Naive thymus-derived CD4-positive, alpha-beta T cell (primary cell): ENCODE measurements at regions of chr15 and their contacts with region 1.

Region 1: DNA sequence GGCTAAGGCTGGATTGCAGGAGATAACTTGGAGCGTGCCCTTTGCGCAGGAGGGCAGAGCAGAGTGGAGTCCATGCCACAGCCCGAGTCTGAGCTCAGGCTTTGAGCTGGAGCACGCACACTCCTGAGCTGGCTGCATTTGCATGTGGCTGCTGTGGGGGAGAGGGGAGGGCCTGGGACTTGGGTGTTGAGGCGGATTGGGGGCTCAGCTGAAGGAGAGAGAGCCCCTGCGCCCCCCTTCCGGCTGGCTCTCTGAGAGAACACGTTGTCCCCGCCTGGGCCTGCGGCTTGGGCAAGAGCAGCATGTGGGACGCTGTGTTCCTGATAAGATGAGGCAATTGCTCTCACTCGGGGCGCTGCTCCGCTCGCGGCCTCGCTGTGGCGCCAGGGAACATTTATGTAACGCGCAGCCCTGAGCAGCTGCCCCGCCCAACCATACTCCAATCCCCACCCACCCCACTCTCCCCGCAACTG is 39.1 kb downstream of the KLF13 start:
- DNase-seq: peak; percentile 53 to 82 (median 78)
- ATAC-seq: peak; percentile 68
- H3K4me3 ChIP-seq: peak overlapping the region; percentile 36
- H3K4me3 Mint-ChIP-seq: peak overlapping the region; percentile 72 to 88 (median 85)
- H3K27ac ChIP-seq: peak overlapping the region; percentile 94
- H3K27ac Mint-ChIP-seq: peak overlapping the region; percentile 92 to 99 (median 97)
- H3K4me1 ChIP-seq: peaks cover 87% of the 10 kb centered on the region in 2 donors
- H3K4me1 Mint-ChIP-seq: peaks cover 85 to 100% (median 99%) of the 10 kb centered on the region in 7 donors
- H3K27me3 ChIP-seq: no peaks in the 10 kb centered on the region
- H3K27me3 Mint-ChIP-seq: no peaks in the 10 kb centered on the region

Region 2: DNA sequence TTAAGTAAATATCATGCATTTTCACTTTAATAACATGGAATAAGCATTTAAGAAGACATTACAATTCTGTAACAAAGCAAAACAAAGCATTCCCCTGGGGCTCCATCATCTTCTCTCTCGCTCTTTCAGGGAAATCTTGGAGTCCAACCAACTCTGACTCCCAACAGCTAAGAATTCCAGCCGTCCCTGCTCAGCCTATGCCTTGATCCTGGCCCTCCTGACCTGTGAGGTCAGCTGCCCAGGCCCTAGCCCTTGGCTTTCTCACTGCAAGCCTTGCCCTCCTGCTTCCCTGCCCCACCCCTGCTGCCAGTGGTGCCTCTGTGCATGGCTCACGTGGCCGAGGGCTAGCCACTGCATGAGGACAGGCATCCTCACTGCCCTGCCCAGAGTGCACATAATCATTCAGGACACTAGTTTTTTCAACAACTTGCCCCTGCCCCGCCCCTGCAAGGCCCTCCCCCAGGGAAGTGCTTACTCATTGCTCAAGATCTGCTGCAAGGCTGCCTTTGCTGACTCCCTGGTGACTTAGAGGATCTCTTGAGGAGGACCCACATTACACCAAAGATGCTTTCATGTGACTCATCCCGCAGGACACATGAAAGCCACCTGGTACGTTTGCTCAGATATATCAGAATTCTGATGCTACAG is 411.8 kb before region 1 on chr15:
- CTCF ChIA-PET with region 1: no interaction called
- POLR2A ChIA-PET with region 1: no interaction called
- intact Hi-C with region 1: no loop called
- DNase-seq: no peak
- ATAC-seq: peak; percentile 60
- H3K4me3 ChIP-seq: no peak overlapping the region
- H3K4me3 Mint-ChIP-seq: no peak overlapping the region
- H3K27ac ChIP-seq: no peak overlapping the region
- H3K27ac Mint-ChIP-seq: peak overlapping the region in 7 of 9 donors; percentile 12 to 81 (median 72)
- H3K4me1 ChIP-seq: no peaks in the 10 kb centered on the region
- H3K4me1 Mint-ChIP-seq: peaks cover 0 to 11% (median 0%) of the 10 kb centered on the region in 7 donors
- H3K27me3 ChIP-seq: no peaks in the 10 kb centered on the region
- H3K27me3 Mint-ChIP-seq: no peaks in the 10 kb centered on the region

Region 3: GRCh38 chr15:31200735-31201151 is 164.9 kb before region 1 on chr15:
- CTCF ChIA-PET with region 1: interaction called, 14 read pairs
- POLR2A ChIA-PET with region 1: interaction called, 4 read pairs
- intact Hi-C with region 1: loop called in 1 of 2 experiments (anchors 2 kb)
- DNase-seq: peak; percentile 45 to 81 (median 72)
- ATAC-seq: peak; percentile 77
- H3K4me3 ChIP-seq: no peak overlapping the region
- H3K4me3 Mint-ChIP-seq: no peak overlapping the region
- H3K27ac ChIP-seq: no peak overlapping the region
- H3K27ac Mint-ChIP-seq: peak overlapping the region in 3 of 9 donors; percentile 4 to 77 (median 38)
- H3K4me1 ChIP-seq: peaks cover 0 to 31% of the 10 kb centered on the region in 2 donors
- H3K4me1 Mint-ChIP-seq: peaks cover 10 to 48% (median 36%) of the 10 kb centered on the region in 7 donors
- H3K27me3 ChIP-seq: no peaks in the 10 kb centered on the region
- H3K27me3 Mint-ChIP-seq: peaks cover 0 to 33% (median 0%) of the 10 kb centered on the region in 5 donors

Region 4: DNA sequence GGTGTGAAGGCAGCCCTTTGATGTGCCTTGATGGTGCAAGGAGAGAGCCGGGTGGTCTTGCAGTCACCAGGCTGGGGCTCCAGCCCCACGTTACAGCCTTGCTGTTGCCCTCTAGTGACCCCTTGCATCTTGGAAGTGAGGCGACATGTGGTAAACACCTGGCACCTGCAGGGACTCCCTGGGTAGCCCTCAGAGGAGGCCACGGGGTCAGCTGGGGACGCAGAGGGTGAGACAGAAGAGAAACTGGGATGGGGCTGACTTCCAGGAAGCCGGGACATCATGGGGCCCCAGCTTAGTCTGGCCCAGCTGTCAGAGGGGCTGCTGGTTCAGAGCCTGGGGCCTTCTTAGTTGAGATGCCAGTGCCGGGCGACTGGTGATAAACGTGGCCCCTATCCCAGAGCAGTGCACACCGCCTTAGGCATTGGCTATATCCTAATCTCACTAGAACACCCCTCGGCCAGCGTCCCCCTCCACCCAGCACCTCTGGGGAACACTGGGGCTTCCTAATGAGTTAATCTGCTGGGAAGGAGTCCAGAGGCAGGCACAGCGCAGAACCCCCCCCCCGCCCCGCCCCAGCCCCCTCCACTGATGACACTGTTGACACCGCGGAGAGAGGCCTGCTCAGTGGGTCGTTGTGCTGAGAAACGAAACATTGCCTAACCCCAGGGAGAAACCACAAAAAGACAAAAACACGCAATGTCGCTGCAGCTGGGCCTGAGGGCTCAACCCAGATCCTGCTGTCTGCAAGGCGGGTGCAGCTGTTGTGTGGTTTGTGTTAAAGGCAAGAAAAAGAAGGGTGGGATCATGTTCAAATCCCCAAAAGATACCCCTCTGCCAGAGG is 99.6 kb before region 1 on chr15:
- CTCF ChIA-PET with region 1: interaction called, 4 read pairs
- POLR2A ChIA-PET with region 1: interaction called, 29 read pairs
- intact Hi-C with region 1: loop called in 1 of 2 experiments (anchors 1 kb)
- DNase-seq: peak; percentile 43 to 90 (median 86)
- ATAC-seq: peak; percentile 84
- H3K4me3 ChIP-seq: peak overlapping the region; percentile 24
- H3K4me3 Mint-ChIP-seq: peak overlapping the region; percentile 71 to 95 (median 78)
- H3K27ac ChIP-seq: peak overlapping the region; percentile 81
- H3K27ac Mint-ChIP-seq: peak overlapping the region; percentile 94 to 100 (median 96)
- H3K4me1 ChIP-seq: peaks cover 48 to 88% of the 10 kb centered on the region in 2 donors
- H3K4me1 Mint-ChIP-seq: peaks cover 62 to 99% (median 96%) of the 10 kb centered on the region in 7 donors
- H3K27me3 ChIP-seq: no peaks in the 10 kb centered on the region
- H3K27me3 Mint-ChIP-seq: no peaks in the 10 kb centered on the region

Region 5: DNA sequence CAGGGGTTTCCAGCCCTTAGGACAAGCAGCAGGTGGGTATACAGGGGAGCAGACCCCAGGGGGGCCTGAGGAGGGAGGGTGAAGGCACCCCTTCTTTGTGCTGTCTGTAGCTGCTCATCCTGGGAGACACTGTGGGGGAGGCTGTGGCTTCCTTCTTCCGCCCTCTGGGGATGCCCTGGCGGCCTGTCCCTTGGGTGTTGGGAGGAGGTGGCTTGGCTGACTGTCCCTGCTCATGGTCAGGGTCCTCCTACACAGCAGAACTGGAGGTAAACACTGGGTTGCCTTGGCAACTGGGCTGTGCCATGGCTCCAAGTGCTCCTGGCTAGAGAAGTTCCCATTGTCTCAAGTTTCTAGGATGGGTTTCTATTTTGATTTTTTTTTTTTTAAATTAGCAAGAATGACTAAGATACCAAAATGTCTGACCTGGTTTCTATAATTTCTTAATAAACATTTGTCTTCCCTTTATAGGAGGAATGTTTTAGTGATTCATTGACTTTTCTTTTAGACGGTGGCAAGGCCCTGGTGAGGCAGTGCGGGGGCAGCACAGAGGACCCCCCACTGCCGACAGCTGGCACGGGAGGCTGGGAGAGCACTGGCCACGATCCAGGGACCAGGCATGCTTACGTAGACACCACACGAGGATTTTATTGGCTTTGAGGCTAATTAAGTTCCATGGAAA is 26.7 kb before region 1 on chr15:
- CTCF ChIA-PET with region 1: interaction called, 11 read pairs
- POLR2A ChIA-PET with region 1: interaction called, 529 read pairs
- intact Hi-C with region 1: no loop called
- DNase-seq: peak in 1 of 9 donors; percentile 76
- ATAC-seq: peak; percentile 47
- H3K4me3 ChIP-seq: peak overlapping the region; percentile 3
- H3K4me3 Mint-ChIP-seq: peak overlapping the region; percentile 27 to 98 (median 74)
- H3K27ac ChIP-seq: peak overlapping the region; percentile 94
- H3K27ac Mint-ChIP-seq: peak overlapping the region; percentile 79 to 99 (median 91)
- H3K4me1 ChIP-seq: peaks cover 95 to 98% of the 10 kb centered on the region in 2 donors
- H3K4me1 Mint-ChIP-seq: peaks cover 85 to 100% (median 98%) of the 10 kb centered on the region in 7 donors
- H3K27me3 ChIP-seq: no peaks in the 10 kb centered on the region
- H3K27me3 Mint-ChIP-seq: no peaks in the 10 kb centered on the region

Region 6: DNA sequence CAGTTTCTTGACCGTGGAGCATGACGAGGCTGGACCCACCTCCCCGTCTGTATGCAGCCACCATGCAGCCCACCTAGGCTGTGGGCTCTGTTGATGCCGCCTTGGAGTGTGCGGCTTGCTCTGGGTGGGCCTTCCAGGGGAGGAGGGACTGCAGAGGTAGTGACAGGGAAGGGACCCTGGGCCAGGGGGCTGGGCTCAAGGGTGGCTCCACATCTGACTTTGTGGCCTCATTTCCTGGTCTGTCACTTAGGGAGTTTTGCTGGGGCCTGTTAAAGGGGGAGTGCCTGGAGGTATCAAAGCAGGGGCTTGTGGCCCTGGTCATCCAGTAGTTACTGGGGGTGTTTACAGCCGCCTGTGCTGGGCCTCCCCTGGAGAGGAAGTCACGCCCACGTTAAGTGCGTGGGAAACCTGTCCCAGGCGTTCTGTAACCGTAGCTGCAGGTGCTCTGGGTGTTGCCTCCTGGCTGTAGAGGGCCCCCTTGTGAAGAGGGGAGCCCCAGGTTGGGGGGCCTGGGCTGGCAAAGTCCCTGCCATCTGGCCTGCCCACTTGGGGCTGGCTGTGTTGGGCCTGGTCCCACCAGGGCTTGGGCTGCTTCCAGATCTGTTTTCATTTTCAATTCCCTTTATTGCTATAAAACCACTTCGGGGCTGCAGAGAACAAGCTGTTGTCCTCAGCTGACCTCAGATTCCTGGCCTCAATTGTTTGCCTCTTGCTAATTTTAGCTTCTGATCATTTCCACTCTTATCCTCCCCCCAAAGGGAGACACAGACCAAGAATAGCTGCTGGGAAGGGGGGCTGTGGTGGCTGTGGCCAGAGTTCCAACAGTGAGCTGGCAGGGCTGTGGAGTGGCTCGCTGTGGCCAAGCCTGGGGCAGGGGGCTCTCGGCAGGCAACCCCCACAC is 12.5 kb before region 1 on chr15:
- CTCF ChIA-PET with region 1: interaction called, 47 read pairs
- POLR2A ChIA-PET with region 1: interaction called, 529 read pairs
- intact Hi-C with region 1: loop called (anchors 1 kb)
- DNase-seq: peak in 7 of 9 donors; percentile 49 to 68 (median 59)
- ATAC-seq: peak; percentile 68
- H3K4me3 ChIP-seq: peak overlapping the region; percentile 47
- H3K4me3 Mint-ChIP-seq: peak overlapping the region; percentile 80 to 88 (median 84)
- H3K27ac ChIP-seq: peak overlapping the region; percentile 94
- H3K27ac Mint-ChIP-seq: peak overlapping the region; percentile 92 to 99 (median 97)
- H3K4me1 ChIP-seq: peaks cover 96 to 99% of the 10 kb centered on the region in 2 donors
- H3K4me1 Mint-ChIP-seq: peaks cover 79 to 100% (median 94%) of the 10 kb centered on the region in 7 donors
- H3K27me3 ChIP-seq: no peaks in the 10 kb centered on the region
- H3K27me3 Mint-ChIP-seq: no peaks in the 10 kb centered on the region

Region 7: GRCh38 chr15:31472636-31473384 is 107.1 kb after region 1 on chr15:
- CTCF ChIA-PET with region 1: interaction called, 9 read pairs
- POLR2A ChIA-PET with region 1: interaction called, 5 read pairs
- intact Hi-C with region 1: loop called in 1 of 2 experiments (anchors 2 kb)
- DNase-seq: peak in 8 of 9 donors; percentile 48 to 71 (median 66)
- ATAC-seq: peak; percentile 90
- H3K4me3 ChIP-seq: peak overlapping the region; percentile 28
- H3K4me3 Mint-ChIP-seq: peak overlapping the region; percentile 69 to 90 (median 79)
- H3K27ac ChIP-seq: peak overlapping the region; percentile 66
- H3K27ac Mint-ChIP-seq: peak overlapping the region; percentile 90 to 96 (median 93)
- H3K4me1 ChIP-seq: peaks cover 29 to 34% of the 10 kb centered on the region in 2 donors
- H3K4me1 Mint-ChIP-seq: peaks cover 22 to 62% (median 58%) of the 10 kb centered on the region in 7 donors
- H3K27me3 ChIP-seq: no peaks in the 10 kb centered on the region
- H3K27me3 Mint-ChIP-seq: no peaks in the 10 kb centered on the region

Region 8: GRCh38 chr15:32838820-32839219 is 1473.1 kb after region 1 on chr15:
- CTCF ChIA-PET with region 1: no interaction called
- POLR2A ChIA-PET with region 1: no interaction called
- intact Hi-C with region 1: no loop called
- DNase-seq: no peak
- ATAC-seq: no peak
- H3K4me3 ChIP-seq: no peak overlapping the region
- H3K4me3 Mint-ChIP-seq: no peak overlapping the region
- H3K27ac ChIP-seq: no peak overlapping the region
- H3K27ac Mint-ChIP-seq: no peak overlapping the region
- H3K4me1 ChIP-seq: no peaks in the 10 kb centered on the region
- H3K4me1 Mint-ChIP-seq: peaks cover 0 to 6% (median 0%) of the 10 kb centered on the region in 7 donors
- H3K27me3 ChIP-seq: no peaks in the 10 kb centered on the region
- H3K27me3 Mint-ChIP-seq: peaks cover 4 to 21% (median 17%) of the 10 kb centered on the region in 5 donors